ENCODE measurements at regions of chr6 and their contacts with region 1.

Region 1: GRCh38 chr6:141562851-141563763 is 569.6 kb upstream of the GJE1 start:
- DNase-seq: no peak
- ATAC-seq: peak; percentile 97
- H3K4me3 Mint-ChIP-seq: peak overlapping the region; percentile 78
- H3K27ac Mint-ChIP-seq: peak overlapping the region; percentile 76
- H3K4me1 Mint-ChIP-seq: peaks cover 10% of the 10 kb centered on the region
- H3K27me3 Mint-ChIP-seq: peaks cover 2% of the 10 kb centered on the region
- CTCF ChIP-seq: no peak

Region 2: DNA sequence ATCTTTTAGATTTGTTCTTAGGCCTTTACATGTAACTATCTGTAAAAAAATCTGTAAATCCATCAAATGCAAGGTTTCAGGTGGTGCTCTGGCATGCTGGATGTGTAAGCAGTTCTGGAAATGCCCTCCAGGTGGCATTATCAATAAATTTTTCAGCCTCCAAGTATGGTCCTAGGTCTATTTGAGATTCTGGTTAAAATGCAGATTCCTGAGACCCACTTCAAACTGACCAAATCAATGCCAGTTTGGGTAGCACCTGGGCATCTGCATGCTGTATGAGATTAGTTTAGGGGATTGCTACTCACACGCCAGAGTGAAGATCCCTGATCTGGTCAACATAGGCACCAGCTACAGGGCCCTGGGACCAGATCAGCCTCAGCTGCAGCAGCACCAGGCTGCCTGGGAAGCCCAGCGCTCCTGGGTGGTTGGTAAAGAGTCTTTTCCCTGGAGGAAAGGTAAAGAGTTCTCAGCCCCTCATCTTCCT is 1681.3 kb before region 1 on chr6:
- CTCF ChIA-PET with region 1: no interaction called
- POLR2A ChIA-PET with region 1: no interaction called
- intact Hi-C with region 1: loop called (anchors 1 kb)
- DNase-seq: no peak
- ATAC-seq: peak; percentile 42
- H3K4me3 Mint-ChIP-seq: no peak overlapping the region
- H3K27ac Mint-ChIP-seq: no peak overlapping the region
- H3K4me1 Mint-ChIP-seq: peaks cover 23% of the 10 kb centered on the region
- H3K27me3 Mint-ChIP-seq: no peaks in the 10 kb centered on the region
- CTCF ChIP-seq: no peak

Region 3: GRCh38 chr6:140790109-140790508 is 773.0 kb before region 1 on chr6:
- CTCF ChIA-PET with region 1: no interaction called
- POLR2A ChIA-PET with region 1: no interaction called
- intact Hi-C with region 1: loop called (anchors 10 kb)
- DNase-seq: no peak
- ATAC-seq: no peak
- H3K4me3 Mint-ChIP-seq: no peak overlapping the region
- H3K27ac Mint-ChIP-seq: no peak overlapping the region
- H3K4me1 Mint-ChIP-seq: no peaks in the 10 kb centered on the region
- H3K27me3 Mint-ChIP-seq: no peaks in the 10 kb centered on the region
- CTCF ChIP-seq: no peak

Region 4: GRCh38 chr6:141133346-141133745 is 429.8 kb before region 1 on chr6:
- CTCF ChIA-PET with region 1: no interaction called
- POLR2A ChIA-PET with region 1: no interaction called
- intact Hi-C with region 1: loop called (anchors 10 kb)
- DNase-seq: no peak
- ATAC-seq: no peak
- H3K4me3 Mint-ChIP-seq: no peak overlapping the region
- H3K27ac Mint-ChIP-seq: no peak overlapping the region
- H3K4me1 Mint-ChIP-seq: no peaks in the 10 kb centered on the region
- H3K27me3 Mint-ChIP-seq: no peaks in the 10 kb centered on the region
- CTCF ChIP-seq: no peak

Region 5: GRCh38 chr6:141483598-141484061 is 79.5 kb before region 1 on chr6:
- CTCF ChIA-PET with region 1: interaction called, 11 read pairs
- POLR2A ChIA-PET with region 1: interaction called, 3 read pairs
- intact Hi-C with region 1: loop called (anchors 1 kb)
- DNase-seq: no peak
- ATAC-seq: peak; percentile 79
- H3K4me3 Mint-ChIP-seq: peak overlapping the region; percentile 78
- H3K27ac Mint-ChIP-seq: peak overlapping the region; percentile 96
- H3K4me1 Mint-ChIP-seq: peaks cover 52% of the 10 kb centered on the region
- H3K27me3 Mint-ChIP-seq: no peaks in the 10 kb centered on the region
- CTCF ChIP-seq: no peak

Region 6: DNA sequence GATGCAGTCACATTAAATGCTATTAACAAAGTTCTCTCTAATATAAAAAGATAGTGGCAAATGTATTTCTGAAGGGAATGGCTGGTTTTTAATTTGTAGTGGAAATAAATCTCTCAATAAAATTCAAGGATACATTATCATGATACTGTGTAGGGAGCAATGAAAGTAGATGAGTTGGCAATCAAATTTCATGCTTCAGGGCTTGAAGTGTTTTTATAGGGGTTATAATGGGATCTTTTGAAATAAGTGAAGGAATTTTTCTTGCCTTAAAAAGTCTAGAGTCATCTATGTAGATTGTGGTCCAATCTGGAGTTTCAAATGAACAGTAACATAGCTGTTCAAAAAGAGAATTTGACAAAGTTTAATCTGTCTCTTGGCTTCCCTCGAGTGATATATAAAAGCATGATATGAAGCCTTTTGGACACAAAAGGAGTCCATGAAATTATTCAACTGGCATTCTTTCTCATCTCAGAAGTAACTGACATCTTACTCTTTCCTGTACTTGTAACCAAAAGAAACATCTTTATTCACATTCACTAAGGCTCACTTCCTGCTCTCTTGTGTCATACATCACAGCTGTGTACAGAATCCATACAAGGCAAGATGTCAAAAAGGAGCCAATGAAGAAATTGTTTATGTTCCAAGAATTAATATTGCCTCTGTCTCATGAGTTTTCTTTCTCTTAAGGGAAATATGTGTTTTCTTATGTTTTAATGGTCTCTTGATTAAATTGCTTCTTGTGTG is 21.4 kb before region 1 on chr6:
- CTCF ChIA-PET with region 1: no interaction called
- POLR2A ChIA-PET with region 1: no interaction called
- intact Hi-C with region 1: no loop called
- DNase-seq: no peak
- ATAC-seq: no peak
- H3K4me3 Mint-ChIP-seq: no peak overlapping the region
- H3K27ac Mint-ChIP-seq: no peak overlapping the region
- H3K4me1 Mint-ChIP-seq: no peaks in the 10 kb centered on the region
- H3K27me3 Mint-ChIP-seq: no peaks in the 10 kb centered on the region
- CTCF ChIP-seq: no peak

Region 7: GRCh38 chr6:143107911-143108761 is 1545.0 kb after region 1 on chr6:
- CTCF ChIA-PET with region 1: no interaction called
- POLR2A ChIA-PET with region 1: no interaction called
- intact Hi-C with region 1: no loop called
- DNase-seq: no peak
- ATAC-seq: no peak
- H3K4me3 Mint-ChIP-seq: no peak overlapping the region
- H3K27ac Mint-ChIP-seq: no peak overlapping the region
- H3K4me1 Mint-ChIP-seq: peaks cover 5% of the 10 kb centered on the region
- H3K27me3 Mint-ChIP-seq: no peaks in the 10 kb centered on the region
- CTCF ChIP-seq: no peak